ENCODE measurements at regions of chr1 and their contacts with region 1.

Region 1: GRCh38 chr1:16498573-16499413 is 15.3 kb downstream of the RNU1-1 start:
- DNase-seq: peak; percentile 66 to 96 (median 91)

Region 2: GRCh38 chr1:16324456-16324890 is 174.3 kb before region 1 on chr1:
- intact Hi-C with region 1: no loop called
- DNase-seq: peak in 4 of 42 donors; percentile 11 to 46 (median 24)

Region 3: DNA sequence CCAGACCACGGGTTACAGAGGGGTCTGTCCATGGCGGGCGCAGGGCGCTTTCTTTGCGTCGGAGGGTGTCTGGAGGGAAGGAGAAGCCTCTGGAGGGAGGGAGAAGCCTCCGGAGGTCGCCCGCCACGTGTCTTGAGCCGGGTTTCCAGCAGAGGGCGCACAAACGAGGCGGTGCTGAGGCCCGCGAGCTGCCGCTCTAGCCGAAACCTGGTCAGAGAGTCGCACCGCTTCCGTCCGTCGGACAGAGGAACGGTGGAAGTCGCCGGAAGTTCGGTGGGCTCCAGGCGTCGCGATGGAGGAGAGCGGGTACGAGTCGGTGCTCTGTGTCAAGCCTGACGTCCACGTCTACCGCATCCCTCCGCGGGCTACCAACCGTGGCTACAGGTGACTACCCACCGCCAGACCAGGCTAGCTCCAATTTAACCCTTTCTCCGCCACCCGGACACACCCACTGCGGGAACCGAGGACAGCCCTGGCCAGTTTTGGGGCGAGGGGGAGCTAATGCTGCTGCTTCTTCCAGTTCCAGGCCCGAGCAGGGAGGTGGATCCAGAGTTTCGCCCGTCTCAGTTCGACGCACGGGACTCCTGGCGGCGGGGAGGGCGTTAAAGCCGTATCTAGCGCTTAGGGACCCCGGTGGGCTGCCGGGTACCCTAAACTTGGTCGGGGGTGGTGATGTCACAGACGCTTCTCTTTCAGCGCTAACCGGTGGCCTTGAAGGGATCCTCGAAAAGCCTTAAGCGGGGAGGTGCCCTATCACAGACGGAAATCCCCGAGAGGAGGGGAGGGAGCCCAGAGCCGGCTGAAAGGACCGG is 58.1 kb before region 1 on chr1 and contains the start of gene NECAP2:
- intact Hi-C with region 1: loop called (anchors 5 kb)
- DNase-seq: peak; percentile 81 to 98 (median 95)